ENCODE measurements at regions of chr1 and their contacts with region 1.

Region 1: DNA sequence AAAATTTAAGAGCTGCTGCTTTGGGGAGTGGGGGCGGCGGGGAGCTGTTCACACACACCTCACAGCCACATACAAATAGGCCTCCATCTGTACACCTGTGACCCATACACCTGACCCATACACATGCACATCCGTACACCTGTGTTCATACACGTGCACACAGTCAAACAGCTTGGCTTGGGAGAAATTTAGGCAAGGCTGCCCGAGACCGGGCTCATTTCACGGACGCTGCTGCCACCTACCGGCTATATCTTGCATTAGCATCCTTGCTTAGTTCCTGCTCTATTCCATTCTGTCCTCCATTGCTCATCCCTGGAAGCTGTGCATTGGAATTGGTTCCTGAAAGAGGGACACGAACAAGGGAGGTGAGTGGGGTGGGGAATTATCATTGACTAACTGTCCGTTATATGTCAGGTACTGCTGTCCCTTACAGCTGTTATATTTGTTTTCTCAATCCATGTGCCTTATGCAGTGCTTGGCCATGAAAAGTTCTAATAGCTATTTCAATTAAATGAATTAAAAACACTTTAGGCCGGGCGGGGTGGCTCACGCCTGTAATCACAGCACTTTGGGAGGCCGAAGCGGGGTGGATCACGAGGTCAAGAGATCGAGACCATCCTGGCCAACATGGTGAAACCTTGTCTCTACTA is 37.1 kb upstream of the EPB41 start:
- DNase-seq: peak; percentile 79
- CTCF ChIP-seq: peak; percentile 86

Region 2: GRCh38 chr1:28412731-28413130 is 464.5 kb before region 1 on chr1:
- CTCF ChIA-PET with region 1: interaction called, 17 read pairs
- POLR2A ChIA-PET with region 1: no interaction called
- DNase-seq: no peak
- CTCF ChIP-seq: no peak

Region 3: DNA sequence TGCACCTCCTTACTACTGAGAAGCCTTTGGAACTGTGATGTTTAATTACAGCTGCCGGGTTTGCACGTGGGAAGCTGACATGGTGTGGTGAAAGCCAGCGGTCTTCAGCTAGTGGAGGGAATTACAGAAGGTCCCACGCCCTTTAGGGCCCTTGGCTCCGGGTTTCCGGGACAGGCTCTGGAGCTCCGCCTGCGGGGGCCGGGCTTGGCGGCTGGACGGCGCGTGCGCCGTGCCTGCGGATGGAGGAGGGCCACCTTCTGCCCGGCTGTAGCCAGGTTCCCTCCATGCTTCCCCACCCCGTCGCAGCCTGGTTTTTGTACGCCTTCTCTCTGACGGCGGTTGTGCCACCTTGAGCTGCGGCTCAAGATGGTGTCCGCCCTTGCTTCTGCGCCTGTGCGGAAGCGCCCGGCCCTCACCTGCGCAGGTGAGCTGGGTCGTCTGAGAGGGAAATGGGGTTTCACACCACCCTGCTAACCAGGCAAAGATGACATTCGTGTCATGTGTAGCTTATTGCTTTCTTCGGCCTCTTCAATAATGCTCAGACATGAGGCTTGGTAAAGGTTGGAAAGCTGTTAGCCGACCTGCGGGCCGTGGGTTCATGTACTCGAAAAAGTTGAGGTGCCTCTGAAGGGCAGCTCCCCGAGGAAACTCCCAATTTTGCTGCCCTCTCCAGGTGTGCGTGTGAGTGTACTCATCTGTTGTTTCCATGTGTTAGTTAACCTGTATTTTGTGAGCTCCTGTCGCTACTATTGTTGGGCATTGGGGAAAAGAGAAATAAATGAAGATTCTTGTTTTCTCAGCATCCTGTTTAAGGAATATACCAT is 101.9 kb before region 1 on chr1:
- CTCF ChIA-PET with region 1: interaction called, 27 read pairs
- POLR2A ChIA-PET with region 1: no interaction called
- DNase-seq: peak; percentile 81
- CTCF ChIP-seq: no peak

Region 4: GRCh38 chr1:28860332-28861073 is 16.8 kb before region 1 on chr1:
- CTCF ChIA-PET with region 1: interaction called, 42 read pairs
- POLR2A ChIA-PET with region 1: no interaction called
- DNase-seq: no peak
- CTCF ChIP-seq: no peak

Region 5: DNA sequence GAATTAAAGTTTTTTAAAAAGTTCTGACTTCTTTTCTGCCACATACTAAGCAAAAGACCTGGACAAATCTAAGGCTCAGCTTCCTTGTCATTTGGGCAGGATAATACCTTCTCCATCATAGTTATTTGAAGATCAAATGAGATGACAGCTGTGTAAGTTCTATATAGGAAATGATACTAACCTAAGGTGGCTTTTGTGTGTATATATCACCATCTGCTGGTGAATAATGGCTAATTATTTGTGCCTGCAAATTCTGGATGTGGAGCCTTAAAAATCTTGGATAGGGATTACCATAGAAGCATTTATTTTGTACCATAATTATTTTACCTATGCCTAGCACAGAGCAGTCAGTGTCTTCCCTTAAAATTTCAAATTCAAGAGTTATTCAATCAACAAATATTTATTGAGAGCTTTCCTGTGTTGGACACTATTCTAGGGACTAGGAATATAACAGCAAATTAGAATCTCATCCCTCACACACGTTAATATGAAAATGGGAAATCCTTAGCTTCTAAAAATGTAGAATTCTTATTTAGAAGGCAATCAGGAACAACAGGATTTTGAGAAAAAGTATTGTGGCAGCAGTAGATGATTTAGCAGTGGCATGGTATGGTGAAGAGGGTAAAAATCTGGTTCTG is 156.7 kb after region 1 on chr1:
- CTCF ChIA-PET with region 1: interaction called, 253 read pairs
- POLR2A ChIA-PET with region 1: no interaction called
- DNase-seq: peak; percentile 62
- CTCF ChIP-seq: peak; percentile 64

Region 6: DNA sequence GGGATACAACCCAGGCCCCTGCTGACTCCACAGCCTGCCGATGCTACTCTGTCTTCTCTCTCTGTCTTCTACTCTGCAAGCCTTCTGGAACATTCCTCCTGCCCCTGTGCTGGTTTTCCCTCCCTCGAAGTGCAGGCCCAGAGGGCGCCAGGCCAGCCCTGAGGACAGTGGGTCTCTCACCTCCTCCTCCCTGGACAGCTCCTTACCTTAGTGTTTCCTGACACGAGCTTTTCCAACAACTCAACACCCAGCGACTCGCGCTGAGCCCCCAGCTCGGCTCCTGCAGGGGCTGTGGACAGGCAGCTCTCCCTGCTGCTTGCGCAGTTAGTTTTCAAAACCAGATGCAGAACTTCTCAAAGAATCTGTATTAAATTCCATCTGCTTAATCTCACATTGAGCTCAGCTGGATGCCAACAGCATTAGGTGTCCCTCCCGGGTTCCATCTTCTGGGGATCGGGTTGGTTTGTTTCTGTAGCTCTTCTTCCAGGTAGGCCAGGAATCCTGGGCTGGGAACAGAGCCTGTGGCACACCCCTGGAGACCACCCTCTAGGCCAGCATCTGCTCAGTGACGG is 413.2 kb after region 1 on chr1:
- CTCF ChIA-PET with region 1: no interaction called
- POLR2A ChIA-PET with region 1: no interaction called
- DNase-seq: no peak
- CTCF ChIP-seq: no peak